Spleen (tissue), 13 donors: ENCODE measurements at regions of chr4 and their contacts with region 1.

Region 1: DNA sequence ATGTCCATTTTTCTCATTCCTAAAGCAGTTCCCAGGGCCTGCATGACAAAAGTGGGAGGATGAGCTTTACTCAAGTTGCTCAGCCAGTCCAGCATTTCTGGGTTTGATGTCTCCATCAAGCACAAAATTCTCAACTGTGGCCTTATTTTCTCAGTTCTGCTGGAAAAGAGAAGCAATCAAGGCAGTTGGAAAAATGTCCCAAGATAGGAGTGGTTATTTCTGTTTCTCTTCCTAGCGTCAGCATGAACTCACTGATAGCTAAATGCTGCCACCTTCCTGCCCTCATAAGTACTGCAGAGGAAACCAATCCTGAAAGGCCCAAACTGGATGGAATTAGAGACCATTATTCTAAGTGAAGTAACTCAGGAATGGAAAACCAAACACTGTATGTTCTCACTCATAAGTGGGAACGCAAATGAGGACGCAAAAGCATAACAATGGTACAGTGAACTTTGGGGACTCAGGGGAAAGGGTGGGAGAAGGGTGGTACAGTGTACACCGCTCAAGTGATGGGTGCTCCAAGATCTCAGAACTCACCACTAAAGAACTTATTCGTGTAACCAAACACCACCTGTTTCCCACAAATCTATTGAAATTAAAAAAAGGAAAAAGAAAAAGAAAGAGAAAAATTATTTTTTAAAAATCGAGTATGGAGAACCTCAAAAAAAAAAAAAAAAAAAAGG is 29.6 kb downstream of the ADH7 start:
- DNase-seq: no peak
- H3K4me3 ChIP-seq: no peak overlapping the region
- H3K27ac ChIP-seq: peak overlapping the region in 5 of 8 donors; percentile 29 to 55 (median 41)
- H3K4me1 ChIP-seq: peaks cover 0 to 19% (median 0%) of the 10 kb centered on the region in 6 donors
- H3K27me3 ChIP-seq: no peaks in the 10 kb centered on the region
- CTCF ChIP-seq: peak; percentile 74 to 97 (median 90)
- POLR2A ChIP-seq: peak in 1 of 3 donors; percentile 11

Region 2: GRCh38 chr4:99117876-99118693 is 287.5 kb before region 1 on chr4:
- intact Hi-C with region 1: loop called (anchors 5 kb)
- DNase-seq: no peak
- H3K4me3 ChIP-seq: no peak overlapping the region
- H3K27ac ChIP-seq: no peak overlapping the region
- H3K4me1 ChIP-seq: peaks cover 0 to 6% (median 1%) of the 10 kb centered on the region in 6 donors
- H3K27me3 ChIP-seq: no peaks in the 10 kb centered on the region
- CTCF ChIP-seq: peak in 3 of 11 experiments; percentile 17 to 41 (median 35)
- POLR2A ChIP-seq: no peak

Region 3: DNA sequence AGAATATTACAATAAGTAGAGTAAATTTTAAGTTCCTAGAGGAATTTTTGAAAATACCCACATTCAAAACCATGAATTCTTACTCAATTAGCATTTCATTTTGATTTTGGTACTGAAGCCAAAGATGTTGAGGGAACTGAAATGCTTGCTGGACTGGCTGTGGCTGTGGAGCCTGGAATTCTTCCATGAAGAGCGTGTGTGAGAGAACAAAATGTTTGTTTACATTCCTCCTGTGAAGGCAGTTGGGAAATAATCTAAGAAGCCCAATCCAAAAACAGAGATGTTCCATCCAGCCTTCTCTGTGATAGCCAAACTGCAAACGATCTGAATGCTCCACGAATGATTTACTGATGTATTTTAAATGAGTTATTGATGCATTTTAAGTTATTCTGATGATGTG is 80.6 kb before region 1 on chr4:
- intact Hi-C with region 1: no loop called
- DNase-seq: no peak
- H3K4me3 ChIP-seq: no peak overlapping the region
- H3K27ac ChIP-seq: peak overlapping the region in 4 of 8 donors; percentile 19 to 58 (median 50)
- H3K4me1 ChIP-seq: no peaks in the 10 kb centered on the region
- H3K27me3 ChIP-seq: no peaks in the 10 kb centered on the region
- CTCF ChIP-seq: no peak
- POLR2A ChIP-seq: no peak

Region 4: GRCh38 chr4:99438405-99438780 is 32.8 kb after region 1 on chr4:
- intact Hi-C with region 1: no loop called
- DNase-seq: no peak
- H3K4me3 ChIP-seq: no peak overlapping the region
- H3K27ac ChIP-seq: no peak overlapping the region
- H3K4me1 ChIP-seq: no peaks in the 10 kb centered on the region
- H3K27me3 ChIP-seq: no peaks in the 10 kb centered on the region
- CTCF ChIP-seq: no peak
- POLR2A ChIP-seq: no peak